H1 (cell line): ENCODE measurements at regions of chr9 and their contacts with region 1.

Region 1: GRCh38 chr9:84966876-84967833 is 297.6 kb downstream of the NTRK2 start:
- DNase-seq: peak; percentile 39 to 80
- H3K4me3 ChIP-seq: no peak overlapping the region
- H3K27ac ChIP-seq: no peak overlapping the region
- H3K4me1 ChIP-seq: no peaks in the 10 kb centered on the region
- H3K27me3 ChIP-seq: no peaks in the 10 kb centered on the region
- CTCF ChIP-seq: peak; percentile 76 to 91 (median 86)
- EP300 ChIP-seq: no peak
- POLR2A ChIP-seq: no peak
- RAD21 ChIP-seq: peak; percentile 89 to 94

Region 2: GRCh38 chr9:84668196-84669012 is 298.8 kb before region 1 on chr9:
- CTCF ChIA-PET with region 1: interaction called, 22 read pairs
- POLR2A ChIA-PET with region 1: no interaction called
- DNase-seq: peak; percentile 44 to 89
- H3K4me3 ChIP-seq: peak overlapping the region; percentile 37 to 64 (median 58)
- H3K27ac ChIP-seq: no peak overlapping the region
- H3K4me1 ChIP-seq: peaks cover 0 to 12% (median 9%) of the 10 kb centered on the region in 4 experiments; a peak in 6 of 7 replicates
- H3K27me3 ChIP-seq: peaks cover 30 to 57% (median 53%) of the 10 kb centered on the region in 4 experiments
- CTCF ChIP-seq: peak; percentile 71 to 90 (median 72)
- EP300 ChIP-seq: no peak
- POLR2A ChIP-seq: no peak
- RAD21 ChIP-seq: peak; percentile 66 to 84

Region 3: DNA sequence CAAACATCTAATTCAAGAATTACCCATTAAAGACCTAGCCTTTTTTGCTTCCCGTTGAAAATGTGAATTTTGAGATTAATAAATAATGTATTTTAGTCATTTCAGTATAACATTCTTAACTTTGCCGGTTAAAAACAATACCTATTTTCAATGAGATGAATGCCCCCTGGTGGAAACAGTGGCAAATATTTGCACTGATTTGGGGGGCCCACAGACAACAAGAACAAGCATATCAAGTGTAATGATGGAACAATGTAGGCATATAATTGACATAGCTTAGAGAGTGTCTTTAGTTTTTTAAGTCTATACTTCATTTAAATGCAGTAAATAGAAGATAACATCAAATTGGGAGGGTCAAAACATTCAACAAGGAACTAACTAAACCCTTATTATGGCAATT is 185.7 kb before region 1 on chr9:
- CTCF ChIA-PET with region 1: interaction called, 23 read pairs
- POLR2A ChIA-PET with region 1: no interaction called
- DNase-seq: no peak
- H3K4me3 ChIP-seq: no peak overlapping the region
- H3K27ac ChIP-seq: no peak overlapping the region
- H3K4me1 ChIP-seq: no peaks in the 10 kb centered on the region
- H3K27me3 ChIP-seq: no peaks in the 10 kb centered on the region
- CTCF ChIP-seq: peak in 2 of 3 experiments; percentile 49 to 51; a peak in 2 of 4 replicates
- EP300 ChIP-seq: no peak
- POLR2A ChIP-seq: no peak
- RAD21 ChIP-seq: peak; percentile 64 to 69

Region 4: GRCh38 chr9:84947363-84947972 is 19.7 kb before region 1 on chr9:
- CTCF ChIA-PET with region 1: interaction called, 29 read pairs
- POLR2A ChIA-PET with region 1: no interaction called
- DNase-seq: no peak
- H3K4me3 ChIP-seq: no peak overlapping the region
- H3K27ac ChIP-seq: no peak overlapping the region
- H3K4me1 ChIP-seq: no peaks in the 10 kb centered on the region; a peak in 1 of 7 replicates
- H3K27me3 ChIP-seq: no peaks in the 10 kb centered on the region
- CTCF ChIP-seq: no peak
- EP300 ChIP-seq: no peak
- POLR2A ChIP-seq: no peak
- RAD21 ChIP-seq: no peak

Region 5: DNA sequence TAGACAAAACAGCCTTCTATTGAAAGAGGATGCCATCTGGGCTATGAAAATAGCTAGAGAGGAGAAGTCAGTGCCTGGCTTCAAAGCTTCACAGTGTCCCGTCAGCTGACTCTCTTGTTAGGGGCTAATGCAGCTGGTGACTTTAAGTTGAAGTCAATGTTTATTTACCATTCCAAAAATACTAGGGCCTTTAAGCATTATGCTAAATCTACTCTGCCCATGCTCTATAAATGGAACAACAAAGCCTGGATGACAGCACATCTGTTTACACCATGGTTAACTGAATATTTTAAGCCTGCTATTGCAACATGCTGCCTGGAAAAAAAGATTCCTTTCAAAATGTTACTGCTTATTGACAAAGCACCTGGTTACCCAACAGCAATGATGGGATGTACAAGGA is 11.5 kb after region 1 on chr9:
- CTCF ChIA-PET with region 1: interaction called, 10 read pairs
- POLR2A ChIA-PET with region 1: no interaction called
- DNase-seq: no peak
- H3K4me3 ChIP-seq: no peak overlapping the region
- H3K27ac ChIP-seq: no peak overlapping the region
- H3K4me1 ChIP-seq: no peaks in the 10 kb centered on the region
- H3K27me3 ChIP-seq: no peaks in the 10 kb centered on the region
- CTCF ChIP-seq: no peak
- EP300 ChIP-seq: no peak
- POLR2A ChIP-seq: no peak
- RAD21 ChIP-seq: no peak

Region 6: GRCh38 chr9:85142968-85143367 is 175.8 kb after region 1 on chr9:
- CTCF ChIA-PET with region 1: interaction called, 30 read pairs
- POLR2A ChIA-PET with region 1: no interaction called
- DNase-seq: no peak
- H3K4me3 ChIP-seq: no peak overlapping the region
- H3K27ac ChIP-seq: no peak overlapping the region
- H3K4me1 ChIP-seq: peaks cover 0 to 6% (median 0%) of the 10 kb centered on the region in 4 experiments; a peak in 1 of 7 replicates
- H3K27me3 ChIP-seq: no peaks in the 10 kb centered on the region
- CTCF ChIP-seq: peak in 2 of 3 experiments; percentile 46 to 72; a peak in 2 of 4 replicates
- EP300 ChIP-seq: no peak
- POLR2A ChIP-seq: no peak
- RAD21 ChIP-seq: peak; percentile 72 to 73